Posterior vena cava (tissue), 2 donors: ENCODE measurements at regions of chrX and their contacts with region 1.

Region 1: GRCh38 chrX:116881983-116882382 is 419.2 kb upstream of the CT83 start:
- DNase-seq: no peak

Region 2: GRCh38 chrX:118459494-118459893 is 1577.5 kb after region 1 on chrX:
- intact Hi-C with region 1: loop called in 1 of 2 experiments (anchors 5 kb)
- DNase-seq: no peak